Lower leg skin (tissue), 4 donors: ENCODE measurements at regions of chr12 and their contacts with region 1.

Region 1: DNA sequence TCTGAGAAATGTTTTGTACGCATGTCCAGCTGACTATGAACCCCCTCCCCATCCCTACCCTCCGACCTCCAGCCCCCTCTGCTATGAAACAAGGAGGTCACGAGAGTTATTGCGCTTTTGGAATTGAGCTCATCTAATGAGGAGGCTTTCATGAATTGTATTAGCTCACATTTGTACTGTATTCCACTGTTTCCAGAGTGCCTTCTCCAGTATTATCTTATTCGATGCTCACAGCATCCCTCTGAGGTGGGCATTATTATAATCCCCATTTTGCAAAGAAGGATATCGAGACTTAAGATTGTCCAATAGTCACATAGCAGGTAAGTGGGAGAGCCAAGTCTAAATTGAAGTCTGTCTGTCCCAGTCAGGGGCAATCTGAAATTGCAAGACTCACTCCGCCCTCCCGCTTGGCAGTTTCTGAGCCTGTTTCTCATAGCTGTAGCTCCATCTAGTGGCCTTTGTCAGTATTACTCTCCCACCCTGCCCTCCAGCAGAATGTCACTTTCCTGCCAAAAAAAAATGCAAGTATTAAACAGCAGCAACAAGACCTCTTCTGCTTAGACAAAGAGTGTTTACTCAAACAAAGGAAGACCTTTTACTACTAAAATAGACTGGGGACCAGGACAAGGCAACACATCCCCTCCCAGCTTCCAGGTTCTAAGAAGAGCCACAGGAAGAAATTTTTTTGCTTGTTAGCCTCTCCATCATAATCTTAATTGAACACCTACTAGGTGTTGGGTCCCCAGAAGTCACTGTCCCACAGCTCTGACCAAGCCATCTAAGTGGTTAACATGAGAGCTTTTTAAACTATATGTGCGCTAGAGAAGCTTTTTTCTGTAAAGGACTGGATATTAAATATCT is 48.6 kb upstream of the TMEM233 start:
- DNase-seq: peak in 1 of 2 donors; percentile 55
- H3K4me3 ChIP-seq: no peak overlapping the region
- CTCF ChIP-seq: no peak
- POLR2A ChIP-seq: no peak

Region 2: DNA sequence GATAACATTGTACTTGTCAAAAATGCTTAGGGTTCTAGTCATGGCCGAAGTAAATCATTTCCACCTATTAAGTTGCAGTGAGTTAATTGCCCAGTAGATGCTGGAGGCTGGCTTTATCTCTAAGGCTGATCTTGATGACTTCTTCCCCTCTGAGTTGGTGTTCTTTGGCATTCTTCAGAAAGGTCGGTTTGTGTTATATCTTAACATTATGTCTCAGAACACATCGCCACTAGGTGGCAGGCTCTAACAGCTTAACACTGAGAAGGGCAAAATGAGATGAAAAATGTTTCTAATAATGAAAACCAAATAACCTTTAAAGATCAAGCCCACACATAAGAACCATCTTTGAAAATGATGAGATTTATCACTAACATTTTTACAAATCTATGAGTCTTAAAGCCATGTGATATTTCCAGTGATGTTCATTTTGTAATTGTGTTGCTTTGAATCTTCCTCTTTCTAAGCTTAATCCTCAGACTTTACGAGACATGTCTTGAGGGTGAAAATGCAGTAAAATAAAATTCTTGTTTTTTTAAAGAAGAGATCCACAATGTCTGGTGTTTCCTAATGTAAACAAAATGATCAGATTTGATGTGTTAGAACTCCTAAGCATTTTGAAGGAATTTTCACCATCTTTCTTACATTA is 1140.0 kb before region 1 on chr12:
- intact Hi-C with region 1: loop called (anchors 10 kb)
- DNase-seq: peak in 1 of 2 donors; percentile 28
- H3K4me3 ChIP-seq: no peak overlapping the region
- CTCF ChIP-seq: peak in 1 of 3 donors; percentile 28
- POLR2A ChIP-seq: no peak